Colonic mucosa (tissue), 4 donors: ENCODE measurements at regions of chrX and their contacts with region 1.

Region 1: GRCh38 chrX:68822641-68823410 is 6.0 kb upstream of the EFNB1 start:
- DNase-seq: no peak
- H3K4me3 ChIP-seq: no peak overlapping the region
- H3K27ac ChIP-seq: no peak overlapping the region
- H3K4me1 ChIP-seq: no peaks in the 10 kb centered on the region
- H3K27me3 ChIP-seq: peaks cover 4% of the 10 kb centered on the region
- CTCF ChIP-seq: peak; percentile 31

Region 2: DNA sequence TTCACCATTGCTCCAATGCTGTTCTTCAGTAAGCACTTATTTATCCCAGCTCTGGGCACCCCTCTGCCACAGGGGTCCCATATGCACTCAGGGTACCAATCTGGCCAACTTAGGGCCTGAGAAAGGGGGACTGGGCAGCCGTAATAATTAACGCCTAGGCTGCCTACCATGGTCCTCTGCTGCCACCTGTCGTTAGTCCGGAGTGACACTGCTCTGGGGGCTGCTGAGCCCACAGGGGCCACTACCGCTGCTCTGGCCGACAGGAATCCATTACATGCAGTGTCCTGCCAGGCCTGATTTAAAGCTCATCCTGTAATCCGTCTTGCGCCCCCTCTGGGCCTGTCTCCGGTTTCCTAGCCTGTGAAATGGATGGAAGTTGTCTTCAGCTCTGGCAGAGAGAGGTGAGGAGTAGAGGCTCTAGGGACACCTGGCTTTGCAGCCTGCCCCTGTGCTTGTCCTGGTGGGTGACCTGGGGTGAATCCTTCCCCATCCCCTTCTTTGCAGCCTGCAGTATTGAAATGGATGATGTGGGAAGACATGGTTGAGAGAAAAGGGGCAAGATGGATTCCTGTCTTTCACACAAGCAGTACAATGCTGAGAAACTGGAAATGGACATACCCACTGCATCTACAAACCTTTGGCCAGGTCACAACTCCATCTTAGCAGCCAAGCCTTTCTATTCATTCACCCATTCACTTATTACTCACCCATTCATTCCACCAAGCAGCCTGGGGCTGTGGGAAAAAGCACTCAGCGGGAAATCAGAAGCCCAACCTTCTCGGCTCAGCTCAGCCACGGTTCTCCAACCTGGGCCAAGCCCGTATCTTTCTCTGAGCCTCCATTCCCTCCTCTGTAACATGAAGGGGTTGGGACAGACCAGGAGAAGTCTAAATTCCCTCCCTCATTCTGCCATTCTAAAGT is 565.0 kb after region 1 on chrX:
- intact Hi-C with region 1: loop called (anchors 5 kb)
- DNase-seq: peak; percentile 41
- H3K4me3 ChIP-seq: no peak overlapping the region
- H3K27ac ChIP-seq: no peak overlapping the region
- H3K4me1 ChIP-seq: no peaks in the 10 kb centered on the region
- H3K27me3 ChIP-seq: peaks cover 3% of the 10 kb centered on the region
- CTCF ChIP-seq: peak; percentile 79